Adrenal gland (tissue), 19 donors: ENCODE measurements at regions of chr12 and their contacts with region 1.

Region 1: GRCh38 chr12:69157023-69157655 is 82.2 kb upstream of the CPSF6 start:
- DNase-seq: peak; percentile 86 to 93 (median 89)
- H3K4me3 ChIP-seq: peak overlapping the region in 1 of 4 donors; percentile 5
- H3K27ac ChIP-seq: no peak overlapping the region
- H3K4me1 ChIP-seq: peaks cover 13 to 17% of the 10 kb centered on the region in 2 donors
- H3K27me3 ChIP-seq: no peaks in the 10 kb centered on the region
- CTCF ChIP-seq: peak; percentile 68 to 94 (median 80)
- POLR2A ChIP-seq: no peak

Region 2: GRCh38 chr12:69211160-69211559 is 54.0 kb after region 1 on chr12:
- intact Hi-C with region 1: no loop called
- DNase-seq: no peak
- H3K4me3 ChIP-seq: no peak overlapping the region
- H3K27ac ChIP-seq: no peak overlapping the region
- H3K4me1 ChIP-seq: no peaks in the 10 kb centered on the region
- H3K27me3 ChIP-seq: no peaks in the 10 kb centered on the region
- CTCF ChIP-seq: no peak
- POLR2A ChIP-seq: no peak

Region 3: DNA sequence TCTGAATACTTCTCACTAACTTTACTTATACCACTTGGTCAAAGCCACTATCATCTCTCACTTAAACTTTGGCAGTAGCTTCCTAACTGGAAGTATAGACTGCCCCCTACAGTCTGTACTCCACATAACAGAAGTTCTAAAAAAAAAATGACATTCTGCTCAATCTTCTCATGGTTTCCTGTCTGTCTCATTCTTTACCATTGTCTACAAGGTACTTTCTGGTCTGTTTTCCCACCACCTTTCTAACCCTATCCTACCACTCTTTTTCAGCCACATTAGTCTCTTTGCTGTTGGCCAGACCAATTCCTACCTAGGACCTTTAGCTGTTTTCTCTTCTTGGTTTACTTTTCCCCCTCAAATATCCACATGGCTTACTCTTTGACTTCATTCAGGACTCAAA is 96.9 kb after region 1 on chr12:
- intact Hi-C with region 1: loop called (anchors 10 kb)
- DNase-seq: no peak
- H3K4me3 ChIP-seq: no peak overlapping the region
- H3K27ac ChIP-seq: no peak overlapping the region
- H3K4me1 ChIP-seq: peaks cover 7 to 30% of the 10 kb centered on the region in 2 donors
- H3K27me3 ChIP-seq: no peaks in the 10 kb centered on the region
- CTCF ChIP-seq: peak; percentile 33 to 81 (median 68)
- POLR2A ChIP-seq: no peak